ENCODE measurements at regions of chr17 and their contacts with region 1.

Region 1: GRCh38 chr17:74862108-74862964 is 2.7 kb upstream of the GRIN2C start:
- DNase-seq: peak; percentile 81
- ATAC-seq: peak; percentile 59
- H3K4me3 Mint-ChIP-seq: no peak overlapping the region
- H3K27ac Mint-ChIP-seq: no peak overlapping the region
- H3K4me1 Mint-ChIP-seq: peaks cover 11% of the 10 kb centered on the region
- H3K27me3 Mint-ChIP-seq: peaks cover 38% of the 10 kb centered on the region

Region 2: DNA sequence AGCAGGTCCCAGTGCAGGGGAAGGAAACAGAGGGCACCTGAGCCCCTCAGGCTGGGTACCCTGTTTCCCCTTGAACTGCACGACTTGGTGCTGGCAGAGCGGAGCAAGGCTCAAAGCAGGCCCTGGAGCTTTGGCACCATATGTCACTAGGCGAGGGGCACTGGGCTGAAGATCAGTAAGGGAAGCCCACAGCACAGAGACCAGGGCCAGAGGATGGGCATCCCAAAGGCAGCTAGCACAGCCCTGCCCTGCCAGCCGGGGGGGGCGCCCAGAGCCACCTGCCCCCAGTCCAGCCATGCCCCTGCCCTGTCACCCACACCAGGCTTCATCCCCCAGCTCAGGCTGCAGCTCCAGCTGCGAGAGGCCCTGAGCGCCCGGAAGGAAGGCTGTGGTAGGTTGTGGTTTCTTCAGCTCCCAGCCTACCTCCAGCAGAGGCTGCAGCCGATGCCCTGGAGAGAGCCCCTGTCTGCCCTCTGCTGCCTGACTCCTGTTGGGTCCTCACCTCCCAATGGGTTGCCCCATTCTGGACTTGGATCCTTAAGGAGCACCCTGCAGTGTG is 103.0 kb before region 1 on chr17:
- POLR2A ChIA-PET with region 1: no interaction called
- DNase-seq: peak; percentile 73
- ATAC-seq: peak; percentile 89
- H3K4me3 Mint-ChIP-seq: peak overlapping the region; percentile 64
- H3K27ac Mint-ChIP-seq: peak overlapping the region; percentile 84
- H3K4me1 Mint-ChIP-seq: peaks cover 44% of the 10 kb centered on the region
- H3K27me3 Mint-ChIP-seq: no peaks in the 10 kb centered on the region

Region 3: GRCh38 chr17:74790161-74791054 is 71.9 kb before region 1 on chr17:
- POLR2A ChIA-PET with region 1: interaction called, 10 read pairs
- DNase-seq: no peak
- ATAC-seq: no peak
- H3K4me3 Mint-ChIP-seq: peak overlapping the region; percentile 53
- H3K27ac Mint-ChIP-seq: peak overlapping the region; percentile 59
- H3K4me1 Mint-ChIP-seq: peaks cover 32% of the 10 kb centered on the region
- H3K27me3 Mint-ChIP-seq: no peaks in the 10 kb centered on the region

Region 4: DNA sequence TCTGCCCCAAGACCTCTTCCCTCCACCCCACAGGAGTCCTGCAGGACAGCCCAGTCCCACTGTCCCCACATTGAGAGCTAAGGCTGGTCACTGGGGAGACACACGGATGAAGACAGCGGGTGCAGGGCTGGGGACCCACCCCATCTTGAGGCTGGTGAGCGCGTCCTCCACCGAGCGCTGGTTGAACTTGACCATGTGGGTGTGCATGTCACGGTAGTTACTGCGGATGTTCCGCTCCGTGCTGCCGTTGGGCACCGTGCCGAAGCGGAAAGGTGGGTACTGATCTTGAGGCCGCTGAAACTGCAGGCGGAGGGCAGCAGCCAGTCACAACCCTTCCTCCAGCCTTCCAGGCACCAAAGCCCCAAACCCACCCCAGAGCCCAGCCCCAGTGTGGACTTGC is 15.7 kb before region 1 on chr17:
- POLR2A ChIA-PET with region 1: no interaction called
- DNase-seq: no peak
- ATAC-seq: no peak
- H3K4me3 Mint-ChIP-seq: no peak overlapping the region
- H3K27ac Mint-ChIP-seq: no peak overlapping the region
- H3K4me1 Mint-ChIP-seq: no peaks in the 10 kb centered on the region
- H3K27me3 Mint-ChIP-seq: peaks cover 24% of the 10 kb centered on the region

Region 5: DNA sequence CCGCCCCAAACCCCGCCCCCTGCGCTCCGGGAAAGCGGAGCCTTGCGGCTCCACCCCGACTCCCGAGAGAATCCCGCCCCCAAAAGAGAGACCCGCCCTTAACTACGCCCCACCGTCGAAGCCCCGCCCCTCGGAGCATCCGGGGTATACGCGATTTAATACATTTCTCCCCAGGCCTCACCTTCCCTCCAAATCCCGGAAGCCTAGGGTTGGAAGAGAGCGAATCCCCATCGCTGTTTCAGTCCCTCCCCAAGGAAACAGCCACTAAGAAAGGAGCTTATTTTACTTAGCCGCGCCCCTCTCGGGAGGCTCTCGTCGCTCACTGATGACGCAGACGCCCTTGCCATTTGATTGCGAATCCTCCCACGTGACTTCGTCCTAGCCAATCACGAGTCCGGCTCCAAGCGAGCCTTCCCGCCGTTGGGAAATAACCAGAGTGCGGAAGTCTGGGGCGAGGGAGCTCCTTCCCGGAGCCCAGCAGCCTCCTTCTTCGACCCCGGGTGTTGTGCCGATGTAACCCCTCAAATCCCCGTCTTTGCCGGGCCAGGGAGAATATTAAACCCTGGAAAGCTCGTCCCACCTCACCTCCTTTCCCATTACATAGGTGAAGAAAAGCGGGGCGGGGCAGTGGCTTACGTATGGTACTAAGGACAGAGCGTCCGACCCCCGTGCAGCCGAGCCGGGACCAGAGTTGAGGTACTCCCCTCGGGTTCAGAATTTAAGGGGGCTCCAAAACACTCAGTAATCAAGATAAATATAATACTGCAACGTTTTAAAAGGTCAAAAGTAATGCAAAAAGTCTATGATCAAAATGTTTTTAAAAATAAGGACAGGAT is 10.9 kb after region 1 on chr17:
- POLR2A ChIA-PET with region 1: interaction called, 12 read pairs
- DNase-seq: peak; percentile 95
- ATAC-seq: peak; percentile 97
- H3K4me3 Mint-ChIP-seq: peak overlapping the region; percentile 94
- H3K27ac Mint-ChIP-seq: peak overlapping the region; percentile 89
- H3K4me1 Mint-ChIP-seq: peaks cover 32% of the 10 kb centered on the region
- H3K27me3 Mint-ChIP-seq: peaks cover 2% of the 10 kb centered on the region

Region 6: GRCh38 chr17:74892974-74893911 is 30.9 kb after region 1 on chr17 and contains the start of gene FADS6:
- POLR2A ChIA-PET with region 1: no interaction called
- DNase-seq: no peak
- ATAC-seq: peak; percentile 57
- H3K4me3 Mint-ChIP-seq: peak within 1 kb of the TSS; percentile 64
- H3K27ac Mint-ChIP-seq: peak within 1 kb of the TSS; percentile 9
- H3K4me1 Mint-ChIP-seq: peaks cover 2% of the 10 kb centered on the region
- H3K27me3 Mint-ChIP-seq: peaks cover 61% of the 10 kb centered on the region
- total RNA-seq, gene FADS6: not detected

Measured in activated naive CD8-positive, alpha-beta T cell treated with anti-CD3 and anti-CD28 coated beads, Interleukin-2, amount 10 ng/mL, durations not matched to agents 7 days and 5 days (primary cell).